K562 (cell line): ENCODE measurements at regions of chr9 and their contacts with region 1.

Region 1: DNA sequence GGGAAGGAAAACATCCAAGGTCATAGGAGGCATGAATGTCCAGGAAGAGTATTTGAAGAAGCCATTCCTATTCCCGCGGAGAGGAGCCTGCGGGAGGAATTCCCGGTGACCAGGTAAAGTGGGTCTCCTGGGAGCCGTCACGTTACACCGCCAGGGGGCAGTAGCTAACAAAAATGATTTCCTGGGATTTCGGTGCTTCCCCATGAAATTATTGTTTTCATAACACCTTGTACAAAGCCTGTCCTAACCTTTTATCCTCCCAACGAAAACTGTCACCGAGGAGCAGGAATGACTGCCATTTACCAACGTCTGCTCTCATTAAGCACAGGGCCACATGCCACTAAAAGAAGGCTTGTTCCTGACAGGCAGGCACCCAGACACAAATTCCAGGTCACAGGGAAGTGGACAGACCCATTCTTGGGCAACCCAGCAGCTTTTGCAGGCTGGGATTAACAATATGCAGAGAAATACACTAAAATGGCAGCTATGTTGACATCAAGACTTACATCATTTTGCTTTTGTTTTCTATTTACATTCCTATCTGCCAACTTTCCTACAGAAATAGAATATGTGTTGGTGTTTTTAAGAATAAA is 41.2 kb upstream of the CTSL start:
- DNase-seq: peak; percentile 59 to 64 (median 60)
- ATAC-seq: peak; percentile 85
- H3K4me3 ChIP-seq: no peak overlapping the region
- H3K27ac ChIP-seq: no peak overlapping the region
- H3K4me1 ChIP-seq: peaks cover 10 to 14% of the 10 kb centered on the region in 2 experiments; a peak in 4 of 5 replicates
- H3K27me3 ChIP-seq: no peaks in the 10 kb centered on the region
- CTCF ChIP-seq: peak; percentile 65 to 79 (median 73)
- EP300 ChIP-seq: no peak
- POLR2A ChIP-seq: no peak
- RAD21 ChIP-seq: peak; percentile 63 to 80

Region 2: GRCh38 chr9:87725900-87726709 is 41.4 kb after region 1 on chr9 and contains the start of gene CTSL:
- CTCF ChIA-PET with region 1: no interaction called
- POLR2A ChIA-PET with region 1: interaction called, 7 read pairs
- in situ Hi-C with region 1: no loop called
- intact Hi-C with region 1: loop called (anchors 2 kb)
- DNase-seq: peak; percentile 86 to 90 (median 88)
- ATAC-seq: peak; percentile 96
- H3K4me3 ChIP-seq: peak within 1 kb of the TSS; percentile 55
- H3K27ac ChIP-seq: peak within 1 kb of the TSS; percentile 82
- H3K4me1 ChIP-seq: peaks cover 15 to 18% of the 10 kb centered on the region in 2 experiments; a peak in 4 of 5 replicates
- H3K27me3 ChIP-seq: no peaks in the 10 kb centered on the region
- CTCF ChIP-seq: peak; percentile 47 to 81 (median 59); a peak in 5 of 6 replicates
- EP300 ChIP-seq: no peak
- POLR2A ChIP-seq: peak; percentile 88
- RAD21 ChIP-seq: peak; percentile 47 to 65
- polyA plus RNA-seq, gene CTSL: 55.9 to 61.8 TPM

Region 3: DNA sequence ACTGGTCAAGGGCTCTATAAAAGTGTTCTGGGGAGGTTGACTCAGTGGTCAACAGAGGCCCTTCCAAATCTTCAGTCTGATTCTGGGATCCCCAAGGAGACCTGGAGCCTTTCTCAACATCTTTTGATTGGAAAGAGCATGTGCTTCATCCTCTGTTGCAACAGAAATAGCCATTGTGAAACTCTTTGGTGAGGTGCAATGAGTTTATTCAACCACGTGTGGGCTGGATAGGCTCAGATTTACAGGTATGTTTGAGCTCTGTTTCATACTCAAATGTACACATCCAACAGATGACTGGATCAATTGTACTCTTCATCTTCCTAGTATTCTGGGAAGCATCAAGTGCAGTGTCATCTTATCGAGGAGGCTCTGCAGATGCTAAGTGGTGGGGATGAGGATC is 101.7 kb after region 1 on chr9:
- CTCF ChIA-PET with region 1: no interaction called
- POLR2A ChIA-PET with region 1: no interaction called
- in situ Hi-C with region 1: no loop called
- intact Hi-C with region 1: no loop called
- DNase-seq: no peak
- ATAC-seq: no peak
- H3K4me3 ChIP-seq: no peak overlapping the region
- H3K27ac ChIP-seq: no peak overlapping the region
- H3K4me1 ChIP-seq: peaks cover 6 to 46% of the 10 kb centered on the region in 2 experiments; a peak in 4 of 5 replicates
- H3K27me3 ChIP-seq: no peaks in the 10 kb centered on the region
- CTCF ChIP-seq: no peak
- EP300 ChIP-seq: no peak
- POLR2A ChIP-seq: no peak
- RAD21 ChIP-seq: no peak

Region 4: DNA sequence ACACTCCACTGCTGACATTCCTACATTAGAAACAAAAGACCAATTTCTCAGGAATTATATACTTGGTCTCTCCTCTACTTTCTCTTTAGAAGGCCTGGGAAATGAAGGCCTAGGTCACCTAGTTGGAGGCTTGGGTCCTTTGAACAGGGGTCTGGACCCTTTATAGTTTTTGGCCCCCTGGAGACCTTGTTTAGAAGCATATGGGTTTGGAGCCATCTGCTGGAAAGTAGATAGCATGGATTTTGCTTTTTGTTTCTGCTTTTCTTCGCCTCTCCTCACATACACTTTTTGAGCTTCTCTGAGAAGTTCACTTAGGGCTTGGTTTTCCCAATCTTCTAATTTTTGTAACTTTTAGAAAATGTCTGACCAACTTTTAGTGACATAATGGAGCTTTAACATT is 356.7 kb after region 1 on chr9:
- CTCF ChIA-PET with region 1: no interaction called
- POLR2A ChIA-PET with region 1: no interaction called
- in situ Hi-C with region 1: no loop called
- intact Hi-C with region 1: loop called (anchors 10 kb)
- DNase-seq: no peak
- ATAC-seq: no peak
- H3K4me3 ChIP-seq: no peak overlapping the region
- H3K27ac ChIP-seq: no peak overlapping the region
- H3K4me1 ChIP-seq: no peaks in the 10 kb centered on the region
- H3K27me3 ChIP-seq: no peaks in the 10 kb centered on the region
- CTCF ChIP-seq: peak; percentile 30 to 37 (median 35); a peak in 2 of 6 replicates
- EP300 ChIP-seq: no peak
- POLR2A ChIP-seq: no peak
- RAD21 ChIP-seq: peak in 1 of 2 experiments; percentile 56; a peak in 3 of 4 replicates